HCT116 (cell line): ENCODE measurements at regions of chr20 and their contacts with region 1.

Region 1: GRCh38 chr20:25696384-25697131 is at the start of gene ZNF337:
- DNase-seq: peak; percentile 93
- ATAC-seq: peak; percentile 98
- H3K4me3 ChIP-seq: peak within 1 kb of the TSS; percentile 89 to 91
- H3K27ac ChIP-seq: peak within 1 kb of the TSS; percentile 92
- H3K4me1 ChIP-seq: peaks cover 5 to 6% of the 10 kb centered on the region in 2 experiments; a peak in 2 of 4 replicates
- H3K27me3 ChIP-seq: no peaks in the 10 kb centered on the region
- CTCF ChIP-seq: peak in 1 of 3 experiments; percentile 6; a peak in 1 of 6 replicates
- POLR2A ChIP-seq: peak; percentile 68
- RAD21 ChIP-seq: 0 out of 2 replicates have a peak, but pooled peaks have one; percentile 5
- total RNA-seq, gene ZNF337: 11.4 TPM

Region 2: GRCh38 chr20:25539742-25540672 is 156.6 kb before region 1 on chr20:
- CTCF ChIA-PET with region 1: no interaction called
- POLR2A ChIA-PET with region 1: no interaction called
- RAD21 ChIA-PET with region 1: no interaction called
- intact Hi-C with region 1: loop called (anchors 10 kb)
- DNase-seq: peak; percentile 16
- ATAC-seq: peak; percentile 92
- H3K4me3 ChIP-seq: no peak overlapping the region
- H3K27ac ChIP-seq: no peak overlapping the region
- H3K4me1 ChIP-seq: peaks cover 4 to 14% of the 10 kb centered on the region in 2 experiments; a peak in 1 of 4 replicates
- H3K27me3 ChIP-seq: no peaks in the 10 kb centered on the region
- CTCF ChIP-seq: peak; percentile 23 to 55 (median 42); a peak in 4 of 6 replicates
- POLR2A ChIP-seq: no peak
- RAD21 ChIP-seq: peak; percentile 56

Region 3: DNA sequence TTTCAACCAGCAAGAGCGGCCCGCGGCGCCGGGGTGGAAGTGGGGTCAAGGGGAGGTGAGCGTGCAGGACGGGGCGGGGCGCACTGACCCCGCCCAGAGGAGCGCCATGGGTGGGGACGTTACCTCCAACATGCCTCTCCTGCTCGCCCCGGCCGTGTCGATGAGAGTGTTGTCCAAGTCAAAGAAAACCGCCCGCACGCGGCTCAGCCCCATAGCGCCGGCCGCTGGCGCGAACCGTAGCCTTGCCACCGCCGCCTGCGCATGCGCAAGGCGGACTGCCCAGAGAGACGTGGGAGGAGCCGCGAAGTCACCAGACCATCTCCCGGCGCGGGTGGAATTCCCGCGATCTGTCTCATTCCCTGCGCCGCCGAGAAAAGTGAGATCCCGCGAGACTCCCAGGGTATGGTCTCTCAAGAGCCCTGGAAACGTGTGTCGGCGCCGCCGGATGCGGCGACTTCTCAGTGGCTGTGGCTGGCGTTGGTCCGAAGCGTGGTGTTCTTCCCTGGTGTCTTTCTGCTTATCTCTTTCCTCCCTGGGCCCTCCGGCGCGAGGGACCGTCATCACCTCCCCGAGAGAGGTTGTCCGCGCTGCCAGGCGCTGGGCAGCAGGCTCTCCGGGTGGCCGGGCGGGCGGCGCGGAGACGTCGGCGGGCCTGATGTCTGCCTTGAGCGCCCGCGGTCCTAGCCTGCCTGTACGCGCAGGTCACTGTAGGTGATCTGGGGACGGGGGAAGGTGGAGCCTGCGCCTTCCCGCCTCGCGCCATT is 72.6 kb before region 1 on chr20 and contains the start of gene NANP:
- CTCF ChIA-PET with region 1: no interaction called
- POLR2A ChIA-PET with region 1: no interaction called
- RAD21 ChIA-PET with region 1: no interaction called
- intact Hi-C with region 1: loop called (anchors 1 kb)
- DNase-seq: peak; percentile 96
- ATAC-seq: peak; percentile 92
- H3K4me3 ChIP-seq: peak within 1 kb of the TSS; percentile 71 to 88
- H3K27ac ChIP-seq: peak within 1 kb of the TSS; percentile 98
- H3K4me1 ChIP-seq: peaks cover 9 to 23% of the 10 kb centered on the region in 2 experiments; a peak in 3 of 4 replicates
- H3K27me3 ChIP-seq: no peaks in the 10 kb centered on the region
- CTCF ChIP-seq: no peak
- POLR2A ChIP-seq: peak; percentile 96
- RAD21 ChIP-seq: no peak
- total RNA-seq, gene NANP: 7.3 TPM

Region 4: DNA sequence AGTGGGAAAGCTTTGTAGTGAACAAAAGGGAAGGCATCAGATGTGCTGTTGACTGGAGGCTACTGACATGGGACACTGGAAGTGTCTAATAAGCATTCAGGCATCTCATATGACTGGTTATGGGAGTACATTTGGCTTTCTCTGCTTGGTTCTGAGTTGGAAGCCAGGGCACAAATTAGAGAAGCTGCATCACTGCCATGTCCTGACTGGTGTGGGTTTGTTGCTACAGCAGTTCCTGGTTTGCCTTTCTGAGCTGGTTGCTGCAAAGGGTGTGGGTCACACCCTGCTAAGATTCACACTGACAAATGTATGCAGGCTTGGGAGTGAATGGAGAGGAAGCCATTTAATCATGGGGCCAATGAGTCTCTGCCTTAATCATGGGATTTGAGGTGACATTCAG is 36.6 kb before region 1 on chr20:
- CTCF ChIA-PET with region 1: no interaction called
- POLR2A ChIA-PET with region 1: no interaction called
- RAD21 ChIA-PET with region 1: no interaction called
- intact Hi-C with region 1: loop called (anchors 5 kb)
- DNase-seq: no peak
- ATAC-seq: no peak
- H3K4me3 ChIP-seq: no peak overlapping the region
- H3K27ac ChIP-seq: no peak overlapping the region
- H3K4me1 ChIP-seq: peaks cover 0 to 7% of the 10 kb centered on the region in 2 experiments; a peak in 1 of 4 replicates
- H3K27me3 ChIP-seq: no peaks in the 10 kb centered on the region
- CTCF ChIP-seq: no peak
- POLR2A ChIP-seq: no peak
- RAD21 ChIP-seq: no peak